ENCODE measurements at regions of chr17 and their contacts with region 1.

Region 1: GRCh38 chr17:50547035-50547735 is at the start of gene SPATA20:
- ATAC-seq: peak; percentile 77 to 89 (median 80)
- H3K4me3 ChIP-seq: peak within 1 kb of the TSS; percentile 24 to 52 (median 38)
- H3K27ac ChIP-seq: peak within 1 kb of the TSS in 1 of 2 donors; percentile 9
- H3K4me1 ChIP-seq: peaks cover 19 to 25% of the 10 kb centered on the region in 2 donors
- total RNA-seq, gene SPATA20: 5.4 to 64.4 (median 25.4) TPM

Region 2: DNA sequence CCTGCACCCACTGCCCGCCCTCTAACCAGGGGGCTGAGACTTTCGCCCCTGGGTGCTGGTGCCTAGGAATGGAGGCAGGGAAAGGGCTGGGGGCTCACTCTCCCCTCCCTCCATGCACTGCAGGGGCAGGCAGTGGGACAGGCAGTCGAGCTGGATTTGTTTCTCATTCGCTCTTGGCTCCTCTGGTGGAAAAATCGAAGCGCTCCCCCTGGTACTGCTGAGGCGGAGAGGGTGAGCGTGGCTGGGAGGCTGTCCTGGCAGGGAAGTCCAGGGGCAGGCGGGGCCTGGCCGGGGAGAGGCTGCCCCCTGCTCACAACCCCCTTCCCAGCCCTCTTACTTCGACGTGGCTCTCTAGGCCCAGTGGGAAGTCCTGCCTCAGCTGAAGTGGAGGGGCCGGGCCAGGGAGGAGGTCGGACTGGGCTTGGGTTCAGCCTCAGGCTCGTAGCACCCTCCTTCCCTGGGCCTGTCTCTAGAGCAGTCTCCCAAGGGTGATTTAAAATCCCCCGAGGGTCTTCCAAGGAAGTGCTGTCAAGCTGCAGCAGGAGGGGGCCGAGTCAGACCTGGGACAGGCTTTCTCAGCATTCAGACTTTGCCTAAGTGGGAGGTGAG is 289.5 kb before region 1 on chr17:
- in situ Hi-C with region 1: no loop called
- ATAC-seq: no peak
- H3K4me3 ChIP-seq: no peak overlapping the region
- H3K27ac ChIP-seq: no peak overlapping the region
- H3K4me1 ChIP-seq: no peaks in the 10 kb centered on the region

Region 3: DNA sequence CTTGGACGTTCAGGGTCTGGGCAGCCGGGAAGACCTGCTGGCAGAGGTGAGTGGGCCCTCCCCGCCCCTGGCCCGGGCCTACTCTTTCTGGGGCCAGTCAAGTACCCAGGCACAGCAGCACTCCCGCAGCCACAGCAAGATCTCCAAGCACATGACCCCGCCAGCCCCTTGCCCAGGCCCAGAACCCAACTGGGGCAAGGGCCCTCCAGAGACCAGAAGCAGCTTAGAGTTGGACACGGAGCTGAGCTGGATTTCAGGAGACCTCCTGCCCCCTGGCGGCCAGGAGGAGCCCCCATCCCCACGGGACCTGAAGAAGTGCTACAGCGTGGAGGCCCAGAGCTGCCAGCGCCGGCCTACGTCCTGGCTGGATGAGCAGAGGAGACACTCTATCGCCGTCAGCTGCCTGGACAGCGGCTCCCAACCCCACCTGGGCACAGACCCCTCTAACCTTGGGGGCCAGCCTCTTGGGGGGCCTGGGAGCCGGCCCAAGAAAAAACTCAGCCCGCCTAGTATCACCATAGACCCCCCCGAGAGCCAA is 78.9 kb after region 1 on chr17:
- in situ Hi-C with region 1: loop called in 1 of 9 experiments (anchors 10 kb)
- ATAC-seq: peak; percentile 68 to 98 (median 76)
- H3K4me3 ChIP-seq: no peak overlapping the region
- H3K27ac ChIP-seq: no peak overlapping the region
- H3K4me1 ChIP-seq: peaks cover 43 to 51% of the 10 kb centered on the region in 2 donors

Region 4: DNA sequence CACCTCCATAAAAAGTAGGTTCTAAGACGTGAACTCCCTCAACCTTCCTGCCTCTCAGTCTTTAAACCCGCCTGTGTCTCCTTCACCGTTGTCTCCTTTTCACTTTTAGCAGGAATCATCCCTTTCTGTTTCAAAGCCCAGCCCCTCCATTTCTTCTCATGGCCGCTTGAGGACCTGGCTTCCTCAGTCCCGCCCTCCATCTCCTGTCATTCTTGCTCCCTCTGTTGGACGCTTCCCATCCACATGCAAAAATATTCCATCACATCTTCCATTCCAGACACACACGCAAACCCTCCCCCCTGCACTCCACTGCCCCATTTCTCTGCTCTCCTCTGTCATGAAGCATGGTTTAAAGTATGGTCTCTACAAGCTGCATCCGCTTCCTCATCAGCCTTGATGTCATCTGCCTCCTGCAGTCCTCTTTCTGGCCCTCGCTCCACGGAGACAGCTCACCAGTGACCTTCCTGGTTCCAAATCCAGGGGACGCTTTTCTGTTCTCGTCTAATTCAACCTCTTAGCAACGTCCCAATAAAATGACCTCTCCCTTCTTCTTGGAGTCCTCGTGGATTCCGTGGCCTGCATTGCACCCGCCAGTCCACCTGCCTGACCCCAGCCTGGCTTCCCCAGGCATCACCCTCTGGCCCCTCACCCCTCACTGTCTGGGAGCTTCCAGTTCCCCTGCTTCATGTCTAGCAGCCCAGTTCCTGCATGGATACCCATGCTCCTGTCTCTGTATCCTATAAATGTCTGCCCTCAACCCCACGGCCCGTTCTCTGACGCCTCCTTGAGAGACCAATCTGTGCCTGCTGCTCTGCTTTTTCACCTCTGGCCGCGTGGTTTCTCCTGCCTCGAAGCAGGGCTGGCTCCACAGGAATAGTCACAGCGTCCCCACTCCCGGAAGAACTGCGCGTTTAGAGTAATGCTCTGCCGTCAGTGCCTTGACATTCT is 134.4 kb after region 1 on chr17:
- in situ Hi-C with region 1: loop called in 1 of 9 experiments (anchors 10 kb)
- ATAC-seq: peak; percentile 79 to 98 (median 86)
- H3K4me3 ChIP-seq: no peak overlapping the region
- H3K27ac ChIP-seq: no peak overlapping the region
- H3K4me1 ChIP-seq: peaks cover 11 to 14% of the 10 kb centered on the region in 2 donors

Region 5: GRCh38 chr17:50689956-50690886 is 143.0 kb after region 1 on chr17:
- in situ Hi-C with region 1: loop called in 3 of 9 experiments (anchors 10 kb)
- ATAC-seq: peak in 5 of 8 experiments; percentile 79 to 89 (median 86)
- H3K4me3 ChIP-seq: no peak overlapping the region
- H3K27ac ChIP-seq: peak overlapping the region; percentile 78 to 87
- H3K4me1 ChIP-seq: peaks cover 44 to 49% of the 10 kb centered on the region in 2 donors

Region 6: GRCh38 chr17:50841949-50842354 is 294.8 kb after region 1 on chr17:
- in situ Hi-C with region 1: loop called in 3 of 9 experiments (anchors 10 to 25 kb)
- ATAC-seq: peak; percentile 59 to 95 (median 88)
- H3K4me3 ChIP-seq: no peak overlapping the region
- H3K27ac ChIP-seq: no peak overlapping the region
- H3K4me1 ChIP-seq: peaks cover 9 to 15% of the 10 kb centered on the region in 2 donors